OCI-LY7 (cell line): ENCODE measurements at regions of chr12 and their contacts with region 1.

Region 1: DNA sequence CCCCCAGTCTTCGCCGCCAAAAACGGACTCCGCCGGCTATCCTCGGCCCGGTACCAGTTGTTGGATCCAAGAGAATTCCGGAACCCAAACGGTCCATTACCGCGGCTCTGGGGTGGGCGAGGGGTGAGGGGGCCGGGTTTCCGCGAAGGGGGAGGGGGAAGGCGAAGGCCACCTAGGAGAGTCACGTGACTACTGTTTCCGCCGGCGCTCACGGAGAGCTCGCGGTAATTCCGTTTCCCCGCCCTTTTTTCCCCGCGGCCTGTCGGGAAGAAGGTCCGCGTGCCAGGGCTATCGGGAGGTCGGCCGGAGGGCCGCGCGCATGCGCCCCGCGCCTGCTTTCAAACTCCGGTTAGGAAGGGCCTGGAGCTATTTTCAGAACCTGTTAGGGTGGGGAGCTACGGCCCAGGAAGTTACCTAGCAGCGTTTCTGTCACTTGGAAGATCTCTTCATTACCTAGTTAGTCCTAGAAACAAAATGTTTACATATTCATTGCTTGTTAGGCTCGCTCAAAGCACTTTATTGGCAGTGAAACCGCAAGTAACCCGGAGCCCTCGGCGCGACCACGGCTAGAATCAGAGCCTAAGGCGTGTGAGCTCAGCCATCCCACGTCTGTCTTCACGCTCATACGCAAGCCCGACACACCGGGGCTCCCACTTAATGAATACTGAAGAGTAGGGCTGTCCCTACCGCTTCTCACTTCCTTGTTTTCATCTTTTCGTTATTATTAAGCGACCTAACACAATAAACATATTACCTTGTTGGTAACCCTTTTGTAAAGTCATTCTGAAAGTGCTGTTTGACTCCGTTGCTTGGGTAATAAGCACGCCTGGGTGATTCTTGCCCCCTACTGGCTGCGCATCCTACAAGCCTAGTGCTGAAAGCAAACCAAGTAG is 624 bp upstream of the SBNO1 start:
- DNase-seq: peak; percentile 100
- H3K4me3 ChIP-seq: peak overlapping the region; percentile 83
- H3K27ac ChIP-seq: peak overlapping the region; percentile 97
- H3K4me1 ChIP-seq: peaks cover 20% of the 10 kb centered on the region
- CTCF ChIP-seq: peak; percentile 96

Region 2: GRCh38 chr12:122526683-122527477 is 838.4 kb before region 1 on chr12 and contains the starts of genes KNTC1 and RSRC2:
- CTCF ChIA-PET with region 1: no interaction called
- POLR2A ChIA-PET with region 1: no interaction called
- intact Hi-C with region 1: loop called (anchors 10 kb)
- DNase-seq: peak; percentile 100
- H3K4me3 ChIP-seq: peak within 1 kb of the TSS; percentile 99
- H3K27ac ChIP-seq: peak within 1 kb of the TSS; percentile 92
- H3K4me1 ChIP-seq: peaks cover 53% of the 10 kb centered on the region
- CTCF ChIP-seq: no peak
- total RNA-seq, gene KNTC1: 138 and 170 TPM in 2 replicates
- total RNA-seq, gene RSRC2: 91.7 and 125 TPM in 2 replicates

Region 3: DNA sequence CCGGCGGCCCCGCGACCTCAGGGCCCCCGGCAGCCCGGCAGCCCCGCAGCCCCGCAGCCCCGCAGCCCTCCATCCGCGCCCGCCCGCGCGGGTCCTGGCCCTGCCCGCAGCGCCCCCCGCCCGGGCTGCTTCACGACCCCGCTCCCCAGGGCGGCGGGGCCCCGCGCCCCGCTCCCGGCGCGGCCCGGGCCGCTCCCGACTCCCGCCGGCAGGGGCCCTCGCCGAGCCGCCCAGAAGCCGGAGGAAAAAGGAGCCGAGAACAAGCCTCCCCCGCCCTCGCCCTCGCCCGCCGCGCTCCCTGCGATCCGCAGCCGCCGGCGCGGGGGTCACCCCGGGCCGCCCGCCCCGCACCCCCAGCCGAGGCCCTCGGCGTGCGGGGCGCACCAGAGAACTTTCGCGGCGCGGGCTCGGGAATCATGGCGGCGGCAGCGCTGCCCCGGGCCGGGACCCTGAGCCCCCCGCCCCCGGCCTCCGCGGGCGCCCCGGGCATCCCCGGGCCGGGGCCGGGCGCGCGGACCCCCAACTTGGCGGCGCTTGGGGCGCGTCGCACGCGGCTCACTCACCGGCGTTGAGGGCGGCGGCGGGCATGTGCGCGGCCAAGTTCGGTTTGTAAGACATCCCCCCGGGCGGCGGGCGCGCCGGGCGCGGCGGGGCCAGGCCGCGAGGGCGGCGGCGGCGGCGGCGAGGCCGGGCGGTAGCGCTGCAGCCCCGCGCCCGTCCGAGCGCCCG is 94.1 kb before region 1 on chr12:
- CTCF ChIA-PET with region 1: interaction called, 3 read pairs
- POLR2A ChIA-PET with region 1: no interaction called
- intact Hi-C with region 1: loop called (anchors 1 kb)
- DNase-seq: peak; percentile 83
- H3K4me3 ChIP-seq: peak overlapping the region; percentile 77
- H3K27ac ChIP-seq: no peak overlapping the region
- H3K4me1 ChIP-seq: peaks cover 21% of the 10 kb centered on the region
- CTCF ChIP-seq: no peak; the same call in 1 of the 2 replicates

Region 4: GRCh38 chr12:123382684-123383083 is 17.4 kb after region 1 on chr12:
- CTCF ChIA-PET with region 1: interaction called, 4 read pairs
- POLR2A ChIA-PET with region 1: interaction called, 12 read pairs
- intact Hi-C with region 1: loop called (anchors 1 kb)
- DNase-seq: no peak
- H3K4me3 ChIP-seq: no peak overlapping the region
- H3K27ac ChIP-seq: no peak overlapping the region
- H3K4me1 ChIP-seq: peaks cover 30% of the 10 kb centered on the region
- CTCF ChIP-seq: no peak

Region 5: DNA sequence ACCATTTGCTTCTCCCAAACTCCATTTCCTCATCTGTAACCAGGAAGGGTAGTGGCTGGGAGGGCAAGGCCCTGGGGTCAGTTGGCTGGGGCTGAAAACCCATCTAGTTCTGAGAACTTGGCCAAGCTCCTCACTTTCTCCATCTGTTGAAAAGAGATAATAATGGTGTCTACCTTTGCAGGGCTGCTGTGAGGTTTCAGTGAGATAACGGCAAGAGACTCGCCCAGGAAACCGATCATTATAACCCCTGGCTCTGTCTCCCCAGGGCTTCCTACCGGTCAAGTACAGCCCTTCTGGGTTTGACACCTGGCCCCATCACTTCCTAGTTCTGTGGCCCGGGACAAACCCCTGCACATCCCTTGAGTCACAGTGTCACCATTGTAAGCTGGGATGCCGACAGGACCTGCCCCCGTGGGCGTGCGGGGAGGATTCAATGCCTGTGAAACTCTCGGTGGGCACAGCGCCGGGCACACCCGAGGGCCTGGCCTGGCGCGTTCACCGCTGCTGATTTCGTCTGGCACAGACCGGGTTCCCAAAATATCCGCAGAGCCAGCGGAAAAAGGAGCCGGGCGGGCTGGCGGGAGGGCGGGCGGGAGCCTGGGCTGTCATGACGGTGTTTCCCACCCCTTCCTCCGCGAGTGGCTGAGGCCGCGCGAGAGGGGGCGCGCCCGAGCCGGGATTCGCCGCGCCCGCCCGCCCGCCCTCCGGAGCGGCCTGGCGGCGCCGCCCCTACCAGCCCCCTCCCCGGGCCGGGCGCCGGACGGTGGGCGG is 23.1 kb after region 1 on chr12:
- CTCF ChIA-PET with region 1: interaction called, 4 read pairs
- POLR2A ChIA-PET with region 1: interaction called, 12 read pairs
- intact Hi-C with region 1: loop called (anchors 1 kb)
- DNase-seq: peak; percentile 83
- H3K4me3 ChIP-seq: peak overlapping the region; percentile 80
- H3K27ac ChIP-seq: peak overlapping the region; percentile 71
- H3K4me1 ChIP-seq: peaks cover 45% of the 10 kb centered on the region
- CTCF ChIP-seq: no peak

Region 6: DNA sequence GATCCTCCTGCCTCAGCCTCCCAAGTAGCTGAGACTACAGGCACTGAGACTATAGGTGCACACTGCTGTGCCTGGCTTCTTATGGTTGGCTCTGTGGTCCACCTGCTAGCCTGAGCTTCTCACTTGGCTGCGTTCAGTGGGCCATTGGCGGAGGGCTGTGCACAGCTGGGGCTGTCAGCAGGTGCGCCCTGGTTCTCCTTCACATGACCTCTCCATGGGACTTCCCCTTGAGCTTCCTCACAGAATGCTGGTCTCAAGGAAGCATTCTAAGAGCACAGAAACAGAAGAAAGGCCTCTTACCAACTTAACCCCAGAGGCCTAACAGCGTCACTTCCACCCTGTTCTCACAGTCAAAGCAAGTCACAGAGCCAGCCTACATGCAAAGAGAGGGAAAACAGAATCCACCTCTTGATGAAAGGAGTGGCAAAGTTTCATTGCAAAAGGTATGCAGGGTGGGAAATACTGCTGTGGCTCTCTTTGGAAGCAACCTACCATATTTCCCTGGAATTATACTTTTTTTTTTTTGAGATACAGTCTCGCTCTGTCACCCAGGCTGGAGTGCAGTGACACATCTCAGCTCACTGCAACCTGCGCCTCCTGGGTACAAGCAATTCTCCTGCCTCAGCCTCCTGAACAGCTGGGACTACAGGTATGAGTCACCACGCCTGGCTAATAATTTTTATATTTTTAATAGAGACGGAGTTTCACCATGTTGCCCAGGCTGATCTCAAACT is 61.9 kb after region 1 on chr12:
- CTCF ChIA-PET with region 1: no interaction called
- POLR2A ChIA-PET with region 1: interaction called, 5 read pairs
- intact Hi-C with region 1: loop called (anchors 2 kb)
- DNase-seq: peak; percentile 98
- H3K4me3 ChIP-seq: peak overlapping the region; percentile 39
- H3K27ac ChIP-seq: peak overlapping the region; percentile 91
- H3K4me1 ChIP-seq: peaks cover 53% of the 10 kb centered on the region
- CTCF ChIP-seq: no peak

Region 7: DNA sequence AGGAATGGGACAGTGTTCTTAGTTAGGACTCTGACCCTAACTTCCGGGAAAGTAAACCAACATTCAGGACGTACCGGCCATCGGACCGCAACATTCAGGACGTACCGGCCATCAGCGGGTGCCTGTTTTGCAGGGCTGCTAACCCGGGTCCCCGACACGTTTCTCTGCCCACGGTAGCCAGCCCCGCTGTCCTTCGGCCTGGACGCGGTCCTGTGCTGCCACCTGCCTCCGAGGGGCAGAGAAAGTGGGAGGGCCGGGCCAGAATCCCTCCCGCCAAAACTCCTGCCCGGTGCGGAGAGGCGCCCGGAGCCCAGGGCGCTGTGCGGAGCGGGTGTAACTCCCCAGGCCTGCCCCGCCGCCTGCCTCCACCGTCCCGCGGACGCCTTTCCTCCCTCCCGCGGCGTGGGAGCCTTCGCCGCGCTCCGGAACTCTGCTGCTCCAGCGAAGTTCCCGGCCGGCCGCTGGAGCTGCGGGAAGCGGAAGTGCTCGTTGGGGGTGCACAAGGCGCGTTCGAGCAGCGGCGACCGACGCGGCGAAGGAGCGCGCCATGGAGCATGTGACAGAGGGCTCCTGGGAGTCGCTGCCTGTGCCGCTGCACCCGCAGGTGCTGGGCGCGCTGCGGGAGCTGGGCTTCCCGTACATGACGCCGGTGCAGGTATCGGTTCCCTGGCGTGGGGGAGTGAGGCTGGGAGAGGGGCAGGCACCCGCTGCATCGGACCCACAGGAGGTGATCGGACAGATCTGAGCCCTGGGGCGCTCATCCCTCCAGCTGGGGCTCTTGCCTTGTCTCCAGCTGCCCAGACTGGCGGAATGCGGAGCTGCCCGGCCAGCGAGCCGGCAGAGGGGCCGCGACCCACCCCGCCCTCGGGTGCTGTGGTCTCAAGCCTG is 236.6 kb after region 1 on chr12 and contains the start of gene DDX55:
- CTCF ChIA-PET with region 1: no interaction called
- POLR2A ChIA-PET with region 1: no interaction called
- intact Hi-C with region 1: loop called (anchors 5 kb)
- DNase-seq: peak; percentile 92
- H3K4me3 ChIP-seq: peak within 1 kb of the TSS; percentile 95
- H3K27ac ChIP-seq: peak within 1 kb of the TSS; percentile 76
- H3K4me1 ChIP-seq: peaks cover 36% of the 10 kb centered on the region
- CTCF ChIP-seq: peak; percentile 53
- total RNA-seq, gene DDX55: 56.6 and 78.6 TPM in 2 replicates